GM12878 (cell line): ENCODE measurements at regions of chr7 and their contacts with region 1.

Region 1: GRCh38 chr7:7761340-7761980 is 43.1 kb upstream of the RPA3 start:
- DNase-seq: no peak
- ATAC-seq: peak; percentile 70
- H3K4me3 ChIP-seq: peak overlapping the region; percentile 56
- H3K27ac ChIP-seq: peak overlapping the region; percentile 55
- H3K4me1 ChIP-seq: peaks cover 6% of the 10 kb centered on the region
- H3K27me3 ChIP-seq: no peaks in the 10 kb centered on the region
- CTCF ChIP-seq: peak in 2 of 3 experiments; percentile 32 to 50; a peak in 4 of 6 replicates
- EP300 ChIP-seq: no peak
- POLR2A ChIP-seq: no peak
- RAD21 ChIP-seq: peak; percentile 61

Region 2: GRCh38 chr7:7640221-7641128 is 121.0 kb before region 1 on chr7 and contains the start of gene UMAD1:
- CTCF ChIA-PET with region 1: interaction called, 4 read pairs
- POLR2A ChIA-PET with region 1: interaction called, 9 read pairs
- RAD21 ChIA-PET with region 1: interaction called, 8 read pairs
- SMC1A ChIA-PET with region 1: interaction called, 11 read pairs
- in situ Hi-C with region 1: no loop called
- intact Hi-C with region 1: loop called (anchors 2 kb)
- DNase-seq: peak; percentile 99
- ATAC-seq: peak; percentile 95
- H3K4me3 ChIP-seq: peak within 1 kb of the TSS; percentile 93
- H3K27ac ChIP-seq: peak within 1 kb of the TSS; percentile 79
- H3K4me1 ChIP-seq: no peaks in the 10 kb centered on the region
- H3K27me3 ChIP-seq: no peaks in the 10 kb centered on the region
- CTCF ChIP-seq: no peak
- EP300 ChIP-seq: 0 out of 4 replicates have a peak, but pooled peaks of 1 of the 2 experiments have one; percentile 15
- POLR2A ChIP-seq: peak; percentile 95
- RAD21 ChIP-seq: no peak
- polyA plus RNA-seq, gene UMAD1: 8.7 to 8.8 TPM

Region 3: DNA sequence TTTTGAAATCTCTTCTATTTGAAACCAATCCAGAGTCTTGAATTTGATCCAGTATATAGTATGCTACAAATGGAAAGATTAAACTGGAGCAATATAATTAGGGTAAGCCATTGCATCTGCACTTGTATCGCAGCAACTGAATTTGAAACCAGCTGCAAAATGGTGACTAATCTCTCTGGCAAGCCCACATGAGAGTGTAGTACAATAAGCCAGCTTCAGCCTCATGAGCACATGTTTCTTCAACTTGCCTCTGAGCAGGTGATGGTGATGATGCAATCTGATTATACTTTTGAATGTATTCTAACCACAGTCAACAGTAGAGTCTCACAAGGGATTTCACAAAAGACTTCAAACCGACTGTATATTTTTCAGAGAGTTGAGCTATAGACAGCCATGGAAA is 42.2 kb before region 1 on chr7:
- CTCF ChIA-PET with region 1: interaction called, 13 read pairs
- POLR2A ChIA-PET with region 1: no interaction called
- RAD21 ChIA-PET with region 1: interaction called, 9 read pairs
- SMC1A ChIA-PET with region 1: interaction called, 16 read pairs
- in situ Hi-C with region 1: no loop called
- intact Hi-C with region 1: no loop called
- DNase-seq: peak; percentile 77
- ATAC-seq: peak; percentile 96
- H3K4me3 ChIP-seq: no peak overlapping the region
- H3K27ac ChIP-seq: peak overlapping the region; percentile 29; the same call in 1 of the 2 replicates
- H3K4me1 ChIP-seq: peaks cover 20% of the 10 kb centered on the region; the same call in 1 of the 2 replicates
- H3K27me3 ChIP-seq: no peaks in the 10 kb centered on the region
- CTCF ChIP-seq: no peak
- EP300 ChIP-seq: peak; percentile 74 to 80; a peak in 3 of 4 replicates
- POLR2A ChIP-seq: peak; percentile 37; the same call in 1 of the 2 replicates
- RAD21 ChIP-seq: peak; percentile 18; the same call in 1 of the 2 replicates

Region 4: DNA sequence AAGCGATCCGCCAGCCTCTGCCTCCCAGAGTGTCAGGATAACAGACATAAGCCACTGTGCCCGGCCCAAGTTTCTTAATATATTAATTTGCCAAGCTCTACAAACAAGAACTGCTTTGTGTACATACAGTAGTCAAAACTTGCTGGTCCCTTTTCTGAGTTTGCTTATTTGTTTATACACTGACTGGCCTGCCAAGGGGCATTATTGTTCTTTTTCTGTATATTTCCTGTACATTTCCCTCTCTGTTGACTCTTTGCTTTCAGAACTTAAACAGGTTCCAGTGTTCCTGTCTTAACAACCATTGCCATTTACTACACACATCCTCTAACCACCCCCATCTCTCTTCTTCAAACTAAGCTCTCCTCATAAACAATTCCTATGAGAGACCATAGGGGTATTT is 18.4 kb after region 1 on chr7:
- CTCF ChIA-PET with region 1: interaction called, 10 read pairs
- POLR2A ChIA-PET with region 1: interaction called, 5 read pairs
- RAD21 ChIA-PET with region 1: interaction called, 20 read pairs
- SMC1A ChIA-PET with region 1: interaction called, 35 read pairs
- in situ Hi-C with region 1: no loop called
- intact Hi-C with region 1: no loop called
- DNase-seq: no peak
- ATAC-seq: peak; percentile 30; the same call in 2 of the 3 replicates
- H3K4me3 ChIP-seq: no peak overlapping the region
- H3K27ac ChIP-seq: no peak overlapping the region
- H3K4me1 ChIP-seq: no peaks in the 10 kb centered on the region
- H3K27me3 ChIP-seq: no peaks in the 10 kb centered on the region
- CTCF ChIP-seq: no peak
- EP300 ChIP-seq: no peak
- POLR2A ChIP-seq: no peak
- RAD21 ChIP-seq: no peak

Region 5: DNA sequence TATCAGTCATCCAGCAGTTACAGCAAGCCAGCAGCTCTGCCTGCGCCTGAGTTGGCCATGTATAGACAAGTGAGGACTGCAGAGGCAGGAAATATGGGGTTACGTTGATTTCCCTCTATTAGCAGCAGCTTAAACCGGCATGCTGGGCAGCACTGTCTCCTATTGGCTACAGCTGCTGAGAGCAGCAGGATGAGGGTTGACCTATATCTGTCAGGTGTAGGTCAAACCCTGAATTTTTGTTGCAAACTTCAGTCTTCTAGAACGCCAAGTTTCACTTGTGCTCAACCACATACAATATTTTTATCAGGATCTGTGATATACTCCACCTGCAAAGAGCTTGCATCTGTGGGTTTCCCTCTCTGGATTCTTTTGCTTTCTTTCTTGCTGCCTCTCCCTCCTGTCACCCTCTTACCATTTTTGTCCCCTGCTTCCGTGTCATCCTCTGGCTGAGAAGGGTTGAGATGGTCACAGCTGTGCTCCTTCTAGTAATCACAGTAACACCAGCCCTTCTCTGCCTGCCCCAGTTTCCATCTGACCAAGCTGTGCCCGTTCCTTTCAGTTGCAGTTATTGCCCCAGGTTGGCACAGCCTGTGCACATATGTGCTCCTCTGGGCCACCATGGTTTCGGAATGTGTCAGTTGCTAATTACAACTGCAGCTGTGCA is 183.3 kb after region 1 on chr7:
- CTCF ChIA-PET with region 1: interaction called, 4 read pairs
- POLR2A ChIA-PET with region 1: interaction called, 3 read pairs
- RAD21 ChIA-PET with region 1: interaction called, 11 read pairs
- SMC1A ChIA-PET with region 1: interaction called, 3 read pairs
- in situ Hi-C with region 1: no loop called
- intact Hi-C with region 1: no loop called
- DNase-seq: peak; percentile 99
- ATAC-seq: peak; percentile 95
- H3K4me3 ChIP-seq: peak overlapping the region; percentile 52
- H3K27ac ChIP-seq: peak overlapping the region; percentile 78
- H3K4me1 ChIP-seq: peaks cover 15% of the 10 kb centered on the region
- H3K27me3 ChIP-seq: no peaks in the 10 kb centered on the region
- CTCF ChIP-seq: 0 out of 6 replicates have a peak, but pooled peaks of 1 of the 3 experiments have one; percentile 7
- EP300 ChIP-seq: peak; percentile 78 to 85
- POLR2A ChIP-seq: peak; percentile 54
- RAD21 ChIP-seq: peak; percentile 46

Region 6: DNA sequence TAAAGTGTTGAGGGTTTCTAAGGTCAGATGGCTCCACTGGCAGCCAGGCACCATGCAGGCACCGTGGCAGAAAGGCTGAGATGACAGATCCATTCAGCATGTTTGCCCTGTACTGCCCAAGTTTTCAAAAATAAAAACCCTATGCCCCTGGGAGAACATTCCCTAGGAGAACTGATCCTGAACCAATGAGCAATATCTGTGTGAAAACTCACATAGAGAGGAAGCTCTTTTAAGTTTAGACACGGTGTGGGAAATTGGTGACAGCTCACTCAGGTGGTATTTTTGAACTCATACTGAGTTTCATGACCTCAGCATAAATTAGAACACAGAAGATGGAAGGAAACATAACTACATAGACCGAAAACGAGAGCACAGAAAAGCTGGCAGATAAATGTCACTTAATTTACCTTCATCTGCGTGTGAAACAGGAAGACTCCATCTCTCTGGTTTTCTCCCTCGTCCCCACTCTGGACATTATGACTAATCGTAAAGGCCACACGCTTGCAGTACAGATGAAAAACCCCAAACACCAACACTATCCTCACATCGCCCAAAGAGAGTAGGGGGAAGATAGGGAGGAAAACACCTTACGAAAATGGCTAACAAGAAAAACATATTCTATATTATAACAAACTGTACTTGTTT is 372.8 kb after region 1 on chr7:
- CTCF ChIA-PET with region 1: no interaction called
- POLR2A ChIA-PET with region 1: no interaction called
- RAD21 ChIA-PET with region 1: interaction called, 3 read pairs
- SMC1A ChIA-PET with region 1: no interaction called
- in situ Hi-C with region 1: no loop called
- intact Hi-C with region 1: loop called (anchors 5 kb)
- DNase-seq: peak; percentile 99
- ATAC-seq: peak; percentile 73
- H3K4me3 ChIP-seq: no peak overlapping the region
- H3K27ac ChIP-seq: peak overlapping the region; percentile 94
- H3K4me1 ChIP-seq: peaks cover 54% of the 10 kb centered on the region
- H3K27me3 ChIP-seq: no peaks in the 10 kb centered on the region
- CTCF ChIP-seq: no peak
- EP300 ChIP-seq: peak; percentile 81 to 92
- POLR2A ChIP-seq: no peak
- RAD21 ChIP-seq: peak; percentile 39; the same call in 1 of the 2 replicates